Motor neuron (in vitro differentiated cells): ENCODE measurements at regions of chr13 and their contacts with region 1.

Region 1: GRCh38 chr13:101149735-101150380 is 266.4 kb downstream of the NALCN start:
- ATAC-seq: peak in 4 of 8 experiments; percentile 21 to 89 (median 65)
- H3K4me3 ChIP-seq: no peak overlapping the region
- H3K27ac ChIP-seq: no peak overlapping the region
- H3K4me1 ChIP-seq: peaks cover 0 to 3% of the 10 kb centered on the region in 2 donors

Region 2: GRCh38 chr13:101452519-101453485 is 302.9 kb after region 1 on chr13 and contains the start of gene ITGBL1:
- in situ Hi-C with region 1: loop called in 3 of 9 experiments (anchors 25 kb)
- ATAC-seq: peak in 3 of 8 experiments; percentile 12 to 61 (median 20)
- H3K4me3 ChIP-seq: no peak within 1 kb of the TSS
- H3K27ac ChIP-seq: no peak within 1 kb of the TSS
- H3K4me1 ChIP-seq: no peaks in the 10 kb centered on the region
- total RNA-seq, gene ITGBL1: 3.2 to 187 (median 7.1) TPM in 4 of 8 experiments, not detected in the others

Region 3: DNA sequence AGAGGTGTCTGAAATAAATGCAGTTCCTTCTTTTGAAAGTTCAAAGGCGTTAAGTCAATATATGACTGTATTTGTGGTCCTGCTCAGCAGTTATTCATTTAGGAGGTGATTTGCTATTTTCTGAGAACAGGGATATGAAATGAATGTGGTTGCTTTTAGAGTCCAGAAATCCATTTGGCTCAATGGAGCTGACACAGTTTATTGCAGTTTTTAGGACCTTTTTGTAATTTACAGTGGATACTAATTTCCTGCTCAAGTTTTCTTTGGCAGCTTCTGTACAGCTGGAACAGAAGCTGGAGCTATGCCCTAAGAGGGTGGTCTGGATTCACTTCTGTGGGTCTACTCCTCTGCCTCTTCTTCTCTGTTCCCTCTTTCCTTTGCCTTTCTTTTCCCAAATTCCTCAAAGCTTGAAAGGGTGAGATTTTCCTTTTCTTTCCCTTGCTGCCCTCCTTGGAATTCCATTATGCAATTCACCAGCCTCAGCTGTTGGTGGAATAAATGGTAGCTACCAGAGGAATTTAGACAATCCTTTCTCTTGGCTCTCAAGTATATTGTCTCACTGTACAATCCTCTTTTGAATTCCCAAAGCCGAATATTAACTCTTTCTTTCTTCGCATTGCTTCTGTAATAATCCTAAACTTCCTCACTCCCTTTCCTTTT is 342.5 kb after region 1 on chr13:
- in situ Hi-C with region 1: loop called in 1 of 9 experiments (anchors 25 kb)
- ATAC-seq: no peak
- H3K4me3 ChIP-seq: no peak overlapping the region
- H3K27ac ChIP-seq: no peak overlapping the region
- H3K4me1 ChIP-seq: no peaks in the 10 kb centered on the region

Region 4: GRCh38 chr13:101552797-101553196 is 402.9 kb after region 1 on chr13:
- in situ Hi-C with region 1: no loop called
- ATAC-seq: no peak
- H3K4me3 ChIP-seq: no peak overlapping the region
- H3K27ac ChIP-seq: no peak overlapping the region
- H3K4me1 ChIP-seq: peaks cover 0 to 2% of the 10 kb centered on the region in 2 donors

Region 5: DNA sequence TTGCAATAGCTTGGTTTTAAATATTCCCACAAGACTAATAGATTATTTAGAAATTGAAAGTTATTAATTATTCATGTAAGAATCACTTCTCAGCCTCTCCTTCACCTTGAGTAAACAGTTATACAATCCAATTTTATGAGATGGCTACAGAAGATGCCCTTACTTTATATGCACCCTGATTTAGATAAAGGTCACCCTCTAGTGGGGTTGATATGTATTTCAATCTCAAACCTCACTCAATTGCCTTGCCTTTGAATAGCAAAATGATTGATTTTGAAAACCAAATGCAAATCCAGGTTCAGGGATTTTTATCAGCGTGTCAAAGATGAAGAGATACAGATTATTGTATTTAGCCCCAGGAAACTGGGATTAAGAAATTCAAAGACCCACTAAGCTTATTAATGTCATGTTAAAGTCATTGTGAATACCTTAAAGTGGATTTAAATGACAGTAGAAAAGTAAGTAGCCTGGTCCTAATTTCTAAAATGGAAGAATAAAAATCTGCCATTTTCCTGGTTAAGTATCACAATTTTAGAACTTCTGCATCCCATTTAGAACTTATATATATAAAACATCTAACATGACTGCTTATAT is 607.7 kb after region 1 on chr13:
- in situ Hi-C with region 1: loop called in 3 of 9 experiments (anchors 25 kb)
- ATAC-seq: peak in 4 of 8 experiments; percentile 44 to 80 (median 74)
- H3K4me3 ChIP-seq: no peak overlapping the region
- H3K27ac ChIP-seq: no peak overlapping the region
- H3K4me1 ChIP-seq: peaks cover 0 to 6% of the 10 kb centered on the region in 2 donors

Region 6: DNA sequence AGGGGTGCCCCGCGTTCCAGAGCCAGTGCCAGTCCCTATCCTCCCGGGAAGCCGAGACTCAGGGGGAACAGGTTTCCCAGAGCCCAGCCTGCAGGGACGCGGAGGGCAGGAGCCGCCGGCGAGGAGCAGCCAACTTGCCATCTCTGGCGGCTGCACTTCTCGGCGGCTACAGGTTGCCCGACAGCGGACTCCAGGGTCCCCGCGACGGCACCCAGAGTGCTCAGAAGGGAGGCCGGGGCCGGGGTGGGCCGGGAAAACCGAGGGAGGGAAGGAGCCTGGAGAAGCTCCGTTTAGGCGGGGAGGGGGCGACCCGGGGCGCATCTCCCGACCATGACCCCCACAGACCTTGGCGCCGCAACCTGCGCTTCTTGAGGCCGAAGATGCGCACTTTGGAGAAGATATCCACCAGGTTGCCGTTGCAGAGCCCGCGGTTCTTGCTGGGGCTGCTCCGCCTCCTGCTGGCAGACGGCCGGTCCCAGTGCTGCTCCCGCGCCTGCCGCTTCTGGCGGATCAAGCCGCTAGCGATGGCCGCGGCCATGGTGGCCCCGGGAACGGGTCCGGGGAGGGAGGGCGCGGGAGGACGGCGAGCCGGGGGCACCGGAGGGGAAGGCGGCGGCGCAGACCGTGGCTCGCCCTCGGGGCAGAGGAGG is 766.4 kb after region 1 on chr13:
- in situ Hi-C with region 1: loop called in 2 of 9 experiments (anchors 25 kb)
- ATAC-seq: peak; percentile 72 to 90 (median 80)
- H3K4me3 ChIP-seq: peak overlapping the region; percentile 42 to 65 (median 51)
- H3K27ac ChIP-seq: no peak overlapping the region
- H3K4me1 ChIP-seq: peaks cover 9 to 15% of the 10 kb centered on the region in 2 donors